ENCODE measurements at regions of chr15 and their contacts with region 1.

Region 1: DNA sequence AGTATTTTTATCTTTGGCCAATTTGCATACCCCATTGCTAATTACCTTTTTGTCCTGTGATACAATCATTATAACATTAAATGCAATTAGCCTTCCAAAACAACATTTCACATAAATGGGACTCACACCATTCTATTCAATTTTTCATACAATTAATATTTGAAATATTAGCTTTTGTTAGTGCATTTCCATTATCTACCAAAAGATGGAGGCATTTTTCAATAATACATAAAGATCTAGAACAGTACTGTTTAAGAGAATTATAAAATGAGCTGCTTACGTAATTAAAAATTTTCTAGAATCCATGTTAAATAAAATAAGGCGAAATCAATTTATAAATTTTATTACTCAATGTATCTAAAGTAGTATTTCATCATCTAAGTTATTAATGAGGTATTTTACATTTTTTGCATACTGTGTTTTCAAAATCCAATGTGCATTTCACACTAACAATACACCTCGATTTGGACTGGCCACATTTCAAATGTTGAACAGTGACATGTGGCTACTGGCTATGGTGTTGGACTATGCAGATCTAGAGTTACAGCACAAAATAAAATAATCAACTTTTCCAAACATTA is 74.3 kb downstream of the TJP1 start:
- DNase-seq: no peak
- H3K4me3 ChIP-seq: no peak overlapping the region
- H3K27ac ChIP-seq: no peak overlapping the region
- H3K4me1 ChIP-seq: no peaks in the 10 kb centered on the region
- H3K27me3 ChIP-seq: no peaks in the 10 kb centered on the region
- CTCF ChIP-seq: peak; percentile 73

Region 2: DNA sequence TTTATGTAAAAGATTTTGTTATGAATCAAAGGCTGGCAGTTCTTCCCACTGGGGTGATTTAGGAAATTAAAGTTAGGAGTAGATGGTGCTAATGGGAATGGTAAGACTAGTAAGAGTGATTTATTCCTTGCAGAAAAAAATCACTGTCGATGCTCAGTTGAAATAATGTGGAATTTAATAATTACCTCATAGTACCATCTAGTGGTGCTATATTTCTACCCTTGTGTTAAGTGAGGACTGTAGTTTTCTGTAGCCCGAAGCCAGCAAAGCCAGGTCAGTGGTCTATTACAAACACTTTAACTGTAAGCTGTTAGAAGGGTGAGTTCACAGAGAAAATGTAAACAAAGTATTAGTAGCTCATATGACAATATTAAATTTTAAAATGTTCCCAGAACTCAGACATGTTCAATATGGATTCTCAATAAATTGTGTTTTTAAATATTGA is 295.3 kb after region 1 on chr15:
- CTCF ChIA-PET with region 1: no interaction called
- POLR2A ChIA-PET with region 1: no interaction called
- intact Hi-C with region 1: loop called (anchors 5 kb)
- DNase-seq: no peak
- H3K4me3 ChIP-seq: no peak overlapping the region
- H3K27ac ChIP-seq: no peak overlapping the region
- H3K4me1 ChIP-seq: no peaks in the 10 kb centered on the region
- H3K27me3 ChIP-seq: no peaks in the 10 kb centered on the region; the same call in 1 of the 2 replicates
- CTCF ChIP-seq: peak; percentile 42; the same call in 1 of the 2 replicates

Region 3: DNA sequence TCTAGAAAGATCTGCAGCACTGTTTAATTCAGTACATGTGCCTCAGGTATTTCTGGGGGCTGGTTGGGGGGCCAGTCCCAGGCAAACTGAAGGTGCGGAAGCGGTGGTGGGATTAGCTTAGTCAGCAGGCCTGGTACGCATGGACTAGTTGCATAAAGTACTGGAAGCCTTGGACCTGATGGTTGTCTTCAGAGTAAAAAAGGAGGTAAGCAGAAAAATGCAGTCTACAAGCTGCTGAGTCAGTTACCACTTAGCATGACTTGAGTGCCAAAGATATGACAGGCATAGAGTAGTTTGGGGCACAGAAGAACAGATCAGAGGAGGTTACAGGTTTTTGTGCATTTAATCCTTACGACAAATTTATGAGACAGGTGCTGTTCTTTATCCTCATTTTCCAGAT is 315.0 kb after region 1 on chr15:
- CTCF ChIA-PET with region 1: no interaction called
- POLR2A ChIA-PET with region 1: no interaction called
- intact Hi-C with region 1: no loop called
- DNase-seq: no peak
- H3K4me3 ChIP-seq: no peak overlapping the region
- H3K27ac ChIP-seq: no peak overlapping the region
- H3K4me1 ChIP-seq: no peaks in the 10 kb centered on the region
- H3K27me3 ChIP-seq: 0 out of 2 replicates have a peak, but pooled peaks cover 4% of the 10 kb centered on the region
- CTCF ChIP-seq: no peak

Region 4: GRCh38 chr15:30073915-30074314 is 326.0 kb after region 1 on chr15:
- CTCF ChIA-PET with region 1: interaction called, 10 read pairs
- POLR2A ChIA-PET with region 1: no interaction called
- intact Hi-C with region 1: no loop called
- DNase-seq: no peak
- H3K4me3 ChIP-seq: no peak overlapping the region
- H3K27ac ChIP-seq: no peak overlapping the region
- H3K4me1 ChIP-seq: no peaks in the 10 kb centered on the region
- H3K27me3 ChIP-seq: no peaks in the 10 kb centered on the region
- CTCF ChIP-seq: no peak

Measured in PC-9 (cell line).